Naive thymus-derived CD8-positive, alpha-beta T cell (primary cell): ENCODE measurements at regions of chr6 and their contacts with region 1.

Region 1: DNA sequence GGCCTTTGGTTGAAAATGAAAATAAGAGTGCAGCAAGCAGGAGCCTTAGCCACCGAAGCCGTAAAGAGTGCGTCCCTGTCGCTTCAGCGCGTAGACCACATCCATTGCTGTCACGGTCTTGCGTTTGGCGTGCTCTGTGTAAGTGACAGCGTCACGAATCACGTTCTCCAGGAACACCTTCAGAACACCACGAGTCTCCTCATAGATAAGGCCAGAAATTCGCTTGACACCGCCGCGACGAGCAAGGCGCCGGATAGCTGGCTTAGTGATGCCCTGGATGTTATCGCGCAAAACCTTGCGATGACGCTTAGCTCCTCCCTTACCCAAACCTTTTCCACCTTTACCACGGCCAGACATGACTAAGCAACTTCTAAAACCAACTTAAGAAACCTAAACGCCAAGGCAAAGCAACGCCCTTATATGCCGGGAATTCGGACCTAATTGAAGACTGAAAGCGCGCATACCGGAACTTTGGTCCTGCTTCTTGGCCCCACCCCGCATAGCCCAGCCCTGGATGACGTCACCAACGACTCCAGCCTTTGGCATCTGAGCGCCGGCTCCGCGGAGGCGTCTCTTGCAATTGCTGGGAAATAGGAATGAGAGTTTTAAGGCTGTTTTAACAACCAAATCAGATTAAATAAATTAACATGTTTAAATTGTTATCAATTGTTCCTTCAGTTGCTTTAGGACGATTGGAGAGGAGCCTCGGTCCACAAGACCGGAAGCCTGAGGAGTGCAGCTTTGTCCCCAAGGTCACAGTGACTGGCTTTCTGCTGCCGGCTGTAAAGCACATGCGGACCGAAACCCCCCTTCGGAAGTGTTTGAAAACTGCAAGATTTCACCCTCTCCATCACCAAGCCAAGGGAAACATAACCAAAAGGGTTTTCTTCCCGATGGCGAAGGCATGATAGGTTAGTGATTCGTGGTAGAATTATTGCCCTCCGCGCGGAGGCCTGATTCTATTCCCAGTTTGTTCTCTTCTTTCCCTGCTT is 79.6 kb upstream of the BTN3A2 start:
- DNase-seq: peak; percentile 80 to 99 (median 93)
- ATAC-seq: peak; percentile 77 to 87
- H3K4me3 Mint-ChIP-seq: peak overlapping the region; percentile 84 to 96 (median 91)
- H3K27ac Mint-ChIP-seq: peak overlapping the region; percentile 95 to 100 (median 98)
- H3K4me1 Mint-ChIP-seq: peaks cover 19 to 36% (median 29%) of the 10 kb centered on the region in 4 donors
- H3K27me3 Mint-ChIP-seq: peaks cover 0 to 7% (median 0%) of the 10 kb centered on the region in 5 donors

Region 2: GRCh38 chr6:26183581-26184366 is 101.7 kb before region 1 on chr6:
- POLR2A ChIA-PET with region 1: interaction called, 21 read pairs
- DNase-seq: peak; percentile 22 to 82 (median 58)
- ATAC-seq: peak; percentile 92 to 94
- H3K4me3 Mint-ChIP-seq: peak overlapping the region; percentile 93 to 100 (median 98)
- H3K27ac Mint-ChIP-seq: peak overlapping the region; percentile 70 to 98 (median 95)
- H3K4me1 Mint-ChIP-seq: peaks cover 27 to 48% (median 46%) of the 10 kb centered on the region in 4 donors
- H3K27me3 Mint-ChIP-seq: no peaks in the 10 kb centered on the region

Region 3: DNA sequence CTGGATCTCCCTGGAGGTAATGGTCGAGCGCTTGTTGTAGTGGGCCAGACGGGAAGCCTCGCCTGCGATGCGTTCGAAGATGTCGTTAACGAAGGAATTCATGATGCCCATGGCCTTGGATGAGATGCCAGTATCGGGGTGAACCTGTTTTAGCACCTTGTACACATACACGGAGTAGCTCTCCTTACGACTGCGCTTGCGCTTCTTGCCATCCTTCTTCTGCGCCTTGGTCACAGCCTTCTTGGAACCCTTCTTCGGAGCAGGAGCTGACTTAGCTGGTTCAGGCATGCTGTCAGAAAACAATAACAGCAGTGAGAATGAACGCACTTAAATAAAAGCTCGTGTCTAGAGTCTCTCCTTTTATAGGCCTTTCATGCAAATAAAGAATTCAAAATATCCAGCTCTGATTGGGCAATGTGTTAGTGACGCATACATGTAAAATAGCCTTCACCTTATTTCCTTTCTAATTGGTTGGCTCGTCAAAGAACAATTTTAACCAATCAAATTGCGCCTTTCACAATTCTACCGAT is 69.0 kb before region 1 on chr6:
- POLR2A ChIA-PET with region 1: interaction called, 70 read pairs
- DNase-seq: peak; percentile 34 to 95 (median 86)
- ATAC-seq: peak; percentile 81 to 84
- H3K4me3 Mint-ChIP-seq: no peak overlapping the region
- H3K27ac Mint-ChIP-seq: no peak overlapping the region
- H3K4me1 Mint-ChIP-seq: peaks cover 0 to 12% (median 7%) of the 10 kb centered on the region in 4 donors
- H3K27me3 Mint-ChIP-seq: no peaks in the 10 kb centered on the region

Region 4: GRCh38 chr6:26240154-26241032 is 45.0 kb before region 1 on chr6:
- POLR2A ChIA-PET with region 1: interaction called, 115 read pairs
- DNase-seq: peak; percentile 39 to 90 (median 80)
- ATAC-seq: peak; percentile 82 to 85
- H3K4me3 Mint-ChIP-seq: peak overlapping the region; percentile 82 to 95 (median 88)
- H3K27ac Mint-ChIP-seq: peak overlapping the region; percentile 92 to 99 (median 98)
- H3K4me1 Mint-ChIP-seq: peaks cover 9 to 25% (median 22%) of the 10 kb centered on the region in 4 donors
- H3K27me3 Mint-ChIP-seq: no peaks in the 10 kb centered on the region

Region 5: DNA sequence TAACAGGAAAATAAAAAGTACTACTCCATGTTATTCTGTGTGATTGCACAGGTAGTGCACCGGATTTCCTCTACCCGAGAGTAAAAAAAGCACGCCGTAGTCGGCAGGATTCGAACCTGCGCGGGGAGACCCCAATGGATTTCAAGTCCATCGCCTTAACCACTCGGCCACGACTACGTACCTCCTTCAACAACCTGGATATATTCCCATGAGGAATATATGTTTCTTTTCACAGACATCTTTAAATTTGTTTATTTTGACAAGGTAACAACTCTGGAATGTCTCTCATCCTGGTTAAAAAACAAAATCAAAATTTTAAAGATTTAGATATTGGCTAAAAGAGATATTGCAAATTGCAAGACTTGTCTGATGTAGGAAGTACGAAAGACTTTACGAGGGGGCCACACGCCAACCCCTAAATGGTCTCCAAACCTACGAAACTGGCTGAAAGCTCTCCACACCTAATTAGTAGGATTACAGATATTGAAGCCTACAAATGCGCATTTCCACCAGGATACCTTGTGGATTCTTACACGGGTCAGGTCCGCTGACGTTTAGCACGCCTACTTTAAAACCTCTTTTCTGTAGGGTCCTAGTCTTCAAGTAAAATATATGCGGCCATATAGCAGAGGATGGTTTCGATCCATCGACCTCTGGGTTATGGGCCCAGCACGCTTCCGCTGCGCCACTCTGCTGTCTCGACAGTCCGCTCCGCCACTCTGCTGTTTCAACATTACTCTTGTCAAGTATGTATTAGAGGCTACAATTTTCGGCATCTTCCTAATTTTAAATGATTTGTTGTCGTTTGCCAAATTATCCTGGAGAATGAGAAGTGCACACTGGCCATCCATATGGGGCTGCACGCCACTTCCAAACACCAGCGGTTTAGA is 27.3 kb after region 1 on chr6:
- POLR2A ChIA-PET with region 1: interaction called, 19 read pairs
- DNase-seq: peak; percentile 65 to 94 (median 86)
- ATAC-seq: peak; percentile 71 to 81
- H3K4me3 Mint-ChIP-seq: peak overlapping the region; percentile 92 to 97 (median 94)
- H3K27ac Mint-ChIP-seq: peak overlapping the region; percentile 74 to 100 (median 94)
- H3K4me1 Mint-ChIP-seq: peaks cover 20 to 47% (median 41%) of the 10 kb centered on the region in 4 donors
- H3K27me3 Mint-ChIP-seq: peaks cover 0 to 6% (median 0%) of the 10 kb centered on the region in 5 donors